Activated CD4-positive, alpha-beta T cell treated with anti-CD3 and anti-CD28 coated beads, Interleukin-2, amount 10 ng/mL, durations not matched to agents 24 days and 14 days (primary cell): ENCODE measurements at regions of chr17 and their contacts with region 1.

Region 1: DNA sequence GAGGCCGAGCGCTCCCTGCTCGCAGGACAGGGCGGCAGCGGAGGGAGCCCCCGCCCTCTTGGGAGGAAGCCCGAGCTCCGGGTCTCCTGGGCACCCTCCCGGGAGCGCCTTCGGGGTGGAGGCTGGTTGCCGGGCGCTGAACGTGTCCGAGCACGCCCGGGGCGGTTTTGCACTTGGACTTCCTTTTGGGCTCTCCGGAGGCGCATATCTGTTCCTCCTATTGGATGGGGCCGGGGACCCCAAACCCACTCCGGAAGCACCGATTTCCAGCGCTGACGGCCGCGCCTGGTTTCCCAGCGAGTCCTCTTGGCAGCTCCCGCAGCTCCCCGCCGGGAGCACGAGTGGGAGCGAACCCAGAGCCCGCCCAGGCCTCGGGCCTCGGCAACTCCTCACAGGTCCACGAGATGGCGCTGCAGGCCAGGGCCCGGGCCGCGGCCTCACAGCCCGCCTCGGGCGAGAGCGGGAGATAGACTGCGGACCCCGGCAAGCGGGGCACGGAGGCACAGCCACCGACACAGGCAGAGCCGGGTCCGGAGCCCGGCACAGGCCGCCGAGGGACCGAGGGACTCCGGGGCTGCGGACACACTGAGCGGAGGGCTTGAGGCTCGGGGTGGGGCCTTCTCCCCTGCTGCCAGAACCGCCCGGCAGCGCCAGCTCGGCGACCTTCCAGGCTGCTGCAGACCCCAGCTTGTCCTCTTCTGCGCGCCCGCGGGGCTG is 12.7 kb downstream of the TBX2 start:
- DNase-seq: peak; percentile 94
- H3K4me3 Mint-ChIP-seq: peak overlapping the region; percentile 69
- H3K27ac Mint-ChIP-seq: no peak overlapping the region
- H3K4me1 Mint-ChIP-seq: peaks cover 11% of the 10 kb centered on the region
- H3K27me3 Mint-ChIP-seq: peaks cover 53% of the 10 kb centered on the region

Region 2: DNA sequence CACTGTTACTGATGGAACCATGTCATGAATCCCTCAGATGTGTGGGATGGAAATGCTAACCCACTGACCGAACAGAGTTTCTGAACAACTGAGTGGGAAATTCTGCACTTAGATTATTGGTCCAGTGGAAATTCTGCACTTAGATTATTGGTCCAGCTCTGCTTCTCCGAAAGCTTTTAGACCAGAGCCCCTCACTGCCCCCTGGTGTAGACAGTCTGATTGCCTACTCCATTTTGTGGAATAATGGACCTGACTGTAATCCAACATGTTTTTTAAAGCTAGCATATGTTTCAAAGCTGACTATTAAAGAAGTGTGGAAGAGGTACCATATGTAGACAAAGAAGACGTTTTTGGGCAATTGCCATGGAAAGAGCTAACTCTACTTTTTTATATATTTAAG is 63.0 kb before region 1 on chr17:
- intact Hi-C with region 1: no loop called
- DNase-seq: no peak
- H3K4me3 Mint-ChIP-seq: no peak overlapping the region
- H3K27ac Mint-ChIP-seq: no peak overlapping the region
- H3K4me1 Mint-ChIP-seq: no peaks in the 10 kb centered on the region
- H3K27me3 Mint-ChIP-seq: no peaks in the 10 kb centered on the region

Region 3: GRCh38 chr17:61551255-61551742 is 139.0 kb after region 1 on chr17:
- intact Hi-C with region 1: loop called (anchors 1 kb)
- DNase-seq: no peak
- H3K4me3 Mint-ChIP-seq: no peak overlapping the region
- H3K27ac Mint-ChIP-seq: no peak overlapping the region
- H3K4me1 Mint-ChIP-seq: no peaks in the 10 kb centered on the region
- H3K27me3 Mint-ChIP-seq: peaks cover 39% of the 10 kb centered on the region

Region 4: DNA sequence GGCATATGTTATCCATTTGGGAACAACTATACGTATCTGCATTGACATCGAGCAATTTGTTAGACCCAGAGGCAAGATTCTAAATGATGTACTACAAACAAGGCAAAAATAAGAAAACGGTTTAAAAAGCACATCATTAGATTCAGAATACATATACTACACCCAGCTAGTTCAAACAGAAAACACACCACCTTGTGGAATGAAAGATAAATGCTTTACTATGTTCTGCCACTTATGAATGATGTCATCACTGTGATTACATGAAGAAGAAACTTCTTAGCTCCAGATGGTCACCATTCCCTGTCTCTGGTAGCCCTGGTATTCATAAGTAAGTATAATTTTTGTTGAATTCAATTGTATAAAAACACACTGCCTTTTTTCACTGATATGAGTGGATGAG is 170.9 kb after region 1 on chr17:
- intact Hi-C with region 1: loop called (anchors 10 kb)
- DNase-seq: no peak
- H3K4me3 Mint-ChIP-seq: no peak overlapping the region
- H3K27ac Mint-ChIP-seq: no peak overlapping the region
- H3K4me1 Mint-ChIP-seq: no peaks in the 10 kb centered on the region
- H3K27me3 Mint-ChIP-seq: peaks cover 33% of the 10 kb centered on the region

Region 5: GRCh38 chr17:61619493-61619892 is 207.2 kb after region 1 on chr17:
- intact Hi-C with region 1: no loop called
- DNase-seq: no peak
- H3K4me3 Mint-ChIP-seq: no peak overlapping the region
- H3K27ac Mint-ChIP-seq: no peak overlapping the region
- H3K4me1 Mint-ChIP-seq: peaks cover 4% of the 10 kb centered on the region
- H3K27me3 Mint-ChIP-seq: peaks cover 26% of the 10 kb centered on the region

Region 6: GRCh38 chr17:61837175-61838051 is 425.1 kb after region 1 on chr17:
- intact Hi-C with region 1: loop called (anchors 5 kb)
- DNase-seq: peak; percentile 83
- H3K4me3 Mint-ChIP-seq: no peak overlapping the region
- H3K27ac Mint-ChIP-seq: no peak overlapping the region
- H3K4me1 Mint-ChIP-seq: peaks cover 2% of the 10 kb centered on the region
- H3K27me3 Mint-ChIP-seq: no peaks in the 10 kb centered on the region

Region 7: DNA sequence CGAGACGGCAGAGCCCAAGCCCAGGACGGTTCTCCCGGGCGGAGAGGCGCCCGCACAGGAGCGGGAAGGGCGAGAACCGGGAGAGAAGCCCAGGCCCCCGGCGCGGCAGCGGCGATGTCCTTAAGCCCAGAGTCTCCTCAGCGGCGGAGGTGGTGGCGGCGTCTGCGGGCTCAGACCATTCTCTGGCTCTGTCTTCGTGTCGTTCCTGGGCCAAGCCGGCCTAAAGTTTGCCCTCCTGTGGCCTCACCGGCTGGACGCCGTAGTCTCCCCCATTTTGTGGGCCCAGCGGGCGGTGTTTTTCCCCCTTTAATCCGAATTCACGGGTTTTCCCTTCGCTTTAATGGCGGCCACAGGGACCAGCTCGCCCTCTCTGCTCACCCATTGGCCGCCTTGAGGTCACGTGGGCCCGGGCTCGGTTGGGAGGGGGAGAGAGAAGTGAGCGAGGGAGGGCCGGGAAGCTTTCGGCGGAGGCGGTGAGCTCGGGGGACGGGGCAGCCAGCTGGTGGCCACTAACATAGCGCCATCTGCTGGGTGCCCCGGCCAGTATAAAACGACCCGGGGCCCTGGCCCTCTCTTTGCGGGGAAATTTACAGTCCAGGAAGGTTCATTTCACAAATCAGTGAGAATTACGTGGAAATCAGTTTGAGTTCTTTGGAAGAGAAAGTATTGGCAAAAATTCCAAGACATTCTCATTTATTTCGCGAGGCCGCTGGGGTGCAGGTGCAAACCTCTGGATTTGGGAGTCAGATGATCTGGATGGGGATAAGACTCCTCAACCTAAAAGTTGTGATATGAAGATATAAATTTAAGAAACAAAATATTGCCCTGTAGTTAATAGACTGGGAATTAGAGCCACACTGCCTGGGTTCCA is 653.5 kb after region 1 on chr17:
- intact Hi-C with region 1: loop called (anchors 5 kb)
- DNase-seq: peak; percentile 99
- H3K4me3 Mint-ChIP-seq: peak overlapping the region; percentile 97
- H3K27ac Mint-ChIP-seq: peak overlapping the region; percentile 99
- H3K4me1 Mint-ChIP-seq: peaks cover 29% of the 10 kb centered on the region
- H3K27me3 Mint-ChIP-seq: no peaks in the 10 kb centered on the region